Heart right ventricle (tissue), 16 donors: ENCODE measurements at regions of chr2 and their contacts with region 1.

Region 1: DNA sequence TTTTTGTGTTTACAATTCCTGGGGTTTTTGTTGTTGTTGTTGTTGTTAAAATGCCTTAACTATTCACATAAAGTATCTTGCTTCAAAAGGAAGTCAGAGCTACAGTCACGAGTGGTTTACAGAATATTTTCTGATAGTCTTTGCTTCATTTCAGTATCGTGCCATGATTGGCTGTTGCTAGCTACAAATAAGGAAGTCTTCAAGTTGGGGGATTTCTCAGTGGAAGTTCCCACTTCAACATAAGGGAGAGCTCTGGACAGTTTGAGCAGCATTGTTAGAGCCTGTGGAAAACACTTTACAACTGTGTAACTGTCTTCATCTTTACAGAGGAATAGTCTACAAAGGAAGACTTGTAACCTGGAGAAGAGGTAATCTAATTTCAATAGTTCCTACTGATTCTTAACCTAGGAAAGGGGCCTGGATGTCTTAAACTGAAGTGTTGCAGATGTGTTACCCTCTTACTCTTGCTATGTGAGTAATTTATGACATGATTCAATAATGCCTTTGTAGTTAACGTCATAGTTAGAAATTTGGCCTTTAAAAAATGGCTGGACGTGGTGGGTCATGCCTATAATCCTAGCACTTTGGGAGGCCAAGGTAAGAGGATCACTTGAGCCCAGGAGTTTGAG is 23.4 kb upstream of the TANK start:
- DNase-seq: peak in 1 of 2 donors; percentile 18
- ATAC-seq: peak in 7 of 8 donors; percentile 72 to 88 (median 80)
- H3K4me3 ChIP-seq: peak overlapping the region in 7 of 10 donors; percentile 1 to 51 (median 32)
- H3K27ac ChIP-seq: peak overlapping the region in 9 of 10 donors; percentile 12 to 86 (median 53)
- H3K4me1 ChIP-seq: peaks cover 0 to 51% (median 20%) of the 10 kb centered on the region in 9 donors
- H3K27me3 ChIP-seq: no peaks in the 10 kb centered on the region
- CTCF ChIP-seq: no peak

Region 2: DNA sequence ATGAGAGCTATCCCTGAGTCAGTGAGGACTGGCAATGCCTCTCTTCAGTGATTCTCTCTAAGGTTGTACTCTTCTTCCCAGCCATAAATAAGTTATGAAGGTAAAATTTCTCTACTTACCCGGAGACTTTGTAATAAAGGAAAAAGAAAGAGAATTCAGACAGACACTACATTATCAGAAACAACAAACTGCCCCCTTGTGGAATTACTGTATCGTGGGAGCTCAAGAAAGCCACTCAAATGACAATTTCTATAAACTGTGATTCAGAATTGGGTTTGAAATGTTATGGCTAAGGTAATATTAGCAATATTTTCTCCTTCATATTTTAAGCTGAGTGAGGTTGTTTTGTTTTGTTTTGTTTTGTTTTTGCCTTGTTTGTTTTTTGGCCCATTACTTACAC is 132.4 kb before region 1 on chr2:
- intact Hi-C with region 1: no loop called
- DNase-seq: no peak
- ATAC-seq: no peak
- H3K4me3 ChIP-seq: no peak overlapping the region
- H3K27ac ChIP-seq: no peak overlapping the region
- H3K4me1 ChIP-seq: no peaks in the 10 kb centered on the region
- H3K27me3 ChIP-seq: no peaks in the 10 kb centered on the region
- CTCF ChIP-seq: peak in 7 of 9 donors; percentile 11 to 50 (median 36)

Region 3: DNA sequence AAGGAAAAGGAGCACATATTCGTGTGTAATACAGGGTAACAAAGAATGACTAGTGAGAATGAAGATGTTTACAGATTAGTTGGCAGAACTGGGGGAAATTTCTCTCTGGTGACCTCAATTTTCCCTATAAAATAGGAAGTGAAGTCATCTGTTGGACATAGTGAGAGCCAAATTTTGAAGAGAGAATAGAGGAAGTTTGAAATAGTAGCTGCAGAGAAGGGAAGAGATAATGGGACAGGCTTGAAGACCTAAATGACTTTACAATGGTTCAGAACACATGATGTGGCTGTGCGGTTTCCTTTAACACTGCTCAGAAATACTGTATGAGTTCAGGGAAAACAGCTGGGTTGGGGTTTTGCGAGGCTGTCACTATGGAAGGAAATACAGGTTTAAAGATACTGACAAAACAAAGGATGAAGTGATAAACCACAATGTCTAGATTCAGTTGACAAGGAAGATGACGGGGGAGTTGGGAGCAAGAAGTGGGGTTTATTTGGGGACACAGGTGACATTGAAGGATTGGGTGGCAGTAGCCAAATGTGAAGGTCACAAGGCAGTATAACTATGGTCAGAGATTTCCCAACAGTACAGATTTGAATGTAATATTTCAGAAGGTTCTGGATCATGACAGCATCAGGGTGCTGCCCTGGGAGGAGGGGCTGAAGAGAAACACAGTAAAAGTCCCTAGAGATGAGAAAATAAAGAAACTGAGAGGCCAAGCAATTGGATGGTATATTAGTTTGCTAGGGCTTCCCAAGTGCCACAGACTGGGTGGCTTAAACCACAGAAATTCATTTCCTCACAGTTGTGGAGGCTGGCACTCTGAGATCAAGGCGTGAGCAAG is 59.2 kb before region 1 on chr2:
- intact Hi-C with region 1: loop called in 1 of 10 experiments (anchors 2 kb)
- DNase-seq: peak in 1 of 2 donors; percentile 15
- ATAC-seq: peak; percentile 78 to 95 (median 93)
- H3K4me3 ChIP-seq: no peak overlapping the region
- H3K27ac ChIP-seq: peak overlapping the region in 9 of 10 donors; percentile 19 to 81 (median 70)
- H3K4me1 ChIP-seq: peaks cover 0 to 27% (median 16%) of the 10 kb centered on the region in 9 donors
- H3K27me3 ChIP-seq: no peaks in the 10 kb centered on the region
- CTCF ChIP-seq: no peak

Region 4: GRCh38 chr2:161208527-161209139 is 71.8 kb after region 1 on chr2:
- intact Hi-C with region 1: no loop called
- DNase-seq: no peak
- ATAC-seq: peak in 2 of 8 donors; percentile 49 to 58
- H3K4me3 ChIP-seq: no peak overlapping the region
- H3K27ac ChIP-seq: no peak overlapping the region
- H3K4me1 ChIP-seq: peaks cover 0 to 30% (median 6%) of the 10 kb centered on the region in 9 donors
- H3K27me3 ChIP-seq: no peaks in the 10 kb centered on the region
- CTCF ChIP-seq: no peak

Region 5: GRCh38 chr2:161426922-161427663 is 290.3 kb after region 1 on chr2:
- intact Hi-C with region 1: no loop called
- DNase-seq: no peak
- ATAC-seq: peak in 2 of 8 donors; percentile 14 to 20
- H3K4me3 ChIP-seq: peak overlapping the region in 5 of 10 donors; percentile 10 to 25 (median 14)
- H3K27ac ChIP-seq: no peak overlapping the region
- H3K4me1 ChIP-seq: peaks cover 0 to 28% (median 15%) of the 10 kb centered on the region in 9 donors
- H3K27me3 ChIP-seq: peaks cover 26 to 100% (median 100%) of the 10 kb centered on the region in 7 donors
- CTCF ChIP-seq: peak in 1 of 9 donors; percentile 1